AG04449 (cell line): ENCODE measurements at regions of chr11 and their contacts with region 1.

Region 1: GRCh38 chr11:75450826-75451821 is 18.1 kb upstream of the KLHL35 start:
- DNase-seq: no peak
- H3K4me3 ChIP-seq: no peak overlapping the region
- CTCF ChIP-seq: peak; percentile 61

Region 2: DNA sequence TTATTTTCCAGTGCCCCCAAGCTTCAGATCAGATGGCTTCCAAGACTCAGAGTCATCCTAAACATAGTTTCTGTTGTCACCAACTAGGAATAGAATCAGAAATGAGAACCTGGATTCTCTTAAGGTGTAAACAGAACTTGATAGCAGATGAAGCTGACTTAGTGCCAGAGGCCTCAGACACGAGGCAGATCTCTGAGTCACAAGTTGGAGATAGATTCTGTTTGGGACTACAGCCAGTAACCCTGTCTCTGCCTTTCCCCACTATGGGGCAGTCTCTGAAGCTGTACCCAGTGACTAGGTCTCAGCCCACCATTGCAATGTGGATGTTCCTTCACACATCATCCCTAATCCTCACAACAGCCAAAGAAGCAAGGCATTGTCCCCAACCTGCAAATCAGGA is 437.0 kb before region 1 on chr11:
- CTCF ChIA-PET with region 1: no interaction called
- POLR2A ChIA-PET with region 1: no interaction called
- DNase-seq: peak; percentile 57
- H3K4me3 ChIP-seq: no peak overlapping the region
- CTCF ChIP-seq: no peak

Region 3: GRCh38 chr11:75437966-75438659 is 13.0 kb before region 1 on chr11:
- CTCF ChIA-PET with region 1: interaction called, 50 read pairs
- POLR2A ChIA-PET with region 1: no interaction called
- DNase-seq: no peak
- H3K4me3 ChIP-seq: no peak overlapping the region
- CTCF ChIP-seq: no peak